HCT116 (cell line): ENCODE measurements at regions of chr6 and their contacts with region 1.

Region 1: GRCh38 chr6:1424306-1424928 is 35.0 kb downstream of the FOXF2 start:
- DNase-seq: peak; percentile 60
- ATAC-seq: peak; percentile 99
- H3K4me3 ChIP-seq: no peak overlapping the region
- H3K27ac ChIP-seq: no peak overlapping the region
- H3K4me1 ChIP-seq: peaks cover 0 to 8% of the 10 kb centered on the region in 2 experiments; a peak in 2 of 4 replicates
- H3K27me3 ChIP-seq: no peaks in the 10 kb centered on the region
- CTCF ChIP-seq: peak; percentile 61 to 81 (median 80)
- POLR2A ChIP-seq: no peak
- RAD21 ChIP-seq: peak; percentile 64

Region 2: DNA sequence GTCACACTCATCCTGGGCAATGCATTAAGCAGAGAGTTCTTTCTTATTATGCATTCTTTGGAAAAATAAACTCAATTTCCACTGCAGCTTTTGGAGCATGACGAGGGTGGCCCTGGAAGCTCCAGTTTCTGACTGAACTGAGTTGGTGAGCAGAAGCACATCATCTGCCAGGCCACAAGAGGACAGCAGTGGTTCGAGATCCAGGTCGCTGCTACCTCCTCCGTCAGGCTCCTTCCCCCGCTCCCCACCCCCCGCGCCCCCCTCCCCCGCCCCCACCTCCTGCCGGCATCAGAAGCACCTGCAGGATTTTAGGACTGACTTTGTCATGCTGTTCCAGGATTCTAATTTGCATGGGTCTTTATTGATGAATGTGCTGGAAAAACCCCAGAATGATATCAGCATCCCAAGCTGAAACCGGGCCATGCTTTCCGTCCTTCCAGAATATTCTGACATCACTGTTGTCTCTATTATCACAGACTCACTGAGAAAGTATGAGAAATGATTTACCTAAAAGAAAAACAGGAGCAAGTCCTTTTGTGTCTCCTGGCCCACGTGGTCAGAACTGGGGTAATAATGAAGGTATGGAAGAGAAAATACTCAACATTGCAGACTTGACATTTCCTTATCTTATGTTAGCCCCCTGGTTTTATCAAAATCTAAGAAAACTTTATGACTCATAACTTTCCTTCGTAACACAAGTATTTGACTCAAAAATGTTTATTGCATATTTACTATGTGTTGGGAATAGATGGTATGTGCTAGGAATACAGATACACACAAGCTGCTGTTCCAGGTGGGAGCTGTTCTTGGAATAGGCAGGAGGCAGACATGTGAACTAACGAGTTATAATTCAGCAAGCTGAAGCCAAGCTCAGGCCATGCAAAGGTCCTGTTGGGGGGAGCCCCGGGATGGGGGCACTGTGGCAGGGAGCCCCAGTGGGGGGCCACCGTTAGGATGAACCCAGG is 511.3 kb before region 1 on chr6:
- CTCF ChIA-PET with region 1: interaction called, 3 read pairs
- POLR2A ChIA-PET with region 1: no interaction called
- RAD21 ChIA-PET with region 1: interaction called in 1 of 2 experiments, 4 read pairs
- intact Hi-C with region 1: loop called (anchors 10 kb)
- DNase-seq: peak; percentile 22
- ATAC-seq: peak; percentile 90
- H3K4me3 ChIP-seq: no peak overlapping the region
- H3K27ac ChIP-seq: no peak overlapping the region
- H3K4me1 ChIP-seq: no peaks in the 10 kb centered on the region
- H3K27me3 ChIP-seq: no peaks in the 10 kb centered on the region
- CTCF ChIP-seq: peak; percentile 29 to 61 (median 38); a peak in 5 of 6 replicates
- POLR2A ChIP-seq: no peak
- RAD21 ChIP-seq: peak; percentile 69

Region 3: GRCh38 chr6:1286972-1287610 is 137.3 kb before region 1 on chr6:
- CTCF ChIA-PET with region 1: no interaction called
- POLR2A ChIA-PET with region 1: no interaction called
- RAD21 ChIA-PET with region 1: no interaction called
- intact Hi-C with region 1: no loop called
- DNase-seq: peak; percentile 19
- ATAC-seq: no peak
- H3K4me3 ChIP-seq: no peak overlapping the region
- H3K27ac ChIP-seq: no peak overlapping the region
- H3K4me1 ChIP-seq: peaks cover 0 to 5% of the 10 kb centered on the region in 2 experiments; a peak in 1 of 4 replicates
- H3K27me3 ChIP-seq: no peaks in the 10 kb centered on the region
- CTCF ChIP-seq: no peak
- POLR2A ChIP-seq: no peak
- RAD21 ChIP-seq: no peak

Region 4: GRCh38 chr6:1396952-1397868 is 27.2 kb before region 1 on chr6:
- CTCF ChIA-PET with region 1: interaction called, 14 read pairs
- POLR2A ChIA-PET with region 1: no interaction called
- RAD21 ChIA-PET with region 1: no interaction called
- intact Hi-C with region 1: no loop called
- DNase-seq: peak; percentile 54
- ATAC-seq: peak; percentile 90
- H3K4me3 ChIP-seq: peak overlapping the region in 1 of 2 experiments; percentile 15; a peak in 1 of 4 replicates
- H3K27ac ChIP-seq: no peak overlapping the region
- H3K4me1 ChIP-seq: 0 out of 4 replicates have a peak, but pooled peaks cover 0 to 3% of the 10 kb centered on the region in 2 experiments
- H3K27me3 ChIP-seq: no peaks in the 10 kb centered on the region
- CTCF ChIP-seq: peak; percentile 78 to 98 (median 97)
- POLR2A ChIP-seq: no peak
- RAD21 ChIP-seq: peak; percentile 81

Region 5: DNA sequence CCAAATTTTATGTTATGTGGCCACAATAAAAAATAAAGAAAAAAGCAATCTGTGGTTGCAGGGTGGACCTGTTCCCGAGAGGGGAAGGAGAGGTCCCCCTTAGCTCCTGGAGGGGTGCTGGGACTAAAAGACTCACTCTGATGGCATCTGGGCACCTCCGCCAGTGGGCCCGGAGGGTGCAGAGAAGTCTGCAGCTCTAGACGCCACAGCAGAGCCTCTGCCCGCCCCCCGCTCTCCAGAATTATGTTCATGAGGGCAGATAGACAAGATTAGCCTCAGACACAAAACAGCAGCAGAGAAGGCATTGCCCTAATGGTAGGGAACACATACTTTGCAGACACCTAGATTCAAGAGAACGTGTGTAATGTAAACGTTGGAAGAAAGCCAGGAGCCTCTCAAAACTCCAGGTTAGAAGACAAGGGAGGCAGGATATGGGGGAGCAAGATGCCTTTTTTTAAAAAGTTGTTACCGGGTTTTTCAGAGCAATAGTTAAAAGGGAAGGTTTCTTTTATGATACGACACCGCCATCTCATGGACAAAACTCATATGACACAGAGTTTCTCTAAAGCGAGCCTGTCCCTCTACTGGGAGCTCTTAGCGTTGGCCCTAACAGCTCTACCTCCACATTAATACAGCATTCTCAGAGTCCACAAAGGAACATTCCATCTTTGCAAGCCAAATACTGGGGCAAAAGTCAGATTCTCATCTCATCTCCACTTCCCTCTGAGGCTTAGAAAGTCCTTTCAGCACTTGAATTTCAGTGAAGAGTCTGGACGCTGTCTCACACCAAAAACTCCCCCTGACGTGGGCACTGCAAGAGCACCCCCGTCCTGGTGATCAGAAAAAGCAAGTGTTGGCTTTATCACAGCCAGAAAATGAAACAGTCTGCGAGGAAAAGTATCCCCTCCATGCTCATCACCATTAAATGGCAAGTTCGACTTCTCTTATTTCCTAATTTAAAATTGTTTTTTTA is 12.2 kb after region 1 on chr6:
- CTCF ChIA-PET with region 1: interaction called, 29 read pairs
- POLR2A ChIA-PET with region 1: no interaction called
- RAD21 ChIA-PET with region 1: interaction called in 1 of 2 experiments, 3 read pairs
- intact Hi-C with region 1: no loop called
- DNase-seq: peak; percentile 57
- ATAC-seq: peak; percentile 97
- H3K4me3 ChIP-seq: no peak overlapping the region
- H3K27ac ChIP-seq: no peak overlapping the region
- H3K4me1 ChIP-seq: peaks cover 0 to 5% of the 10 kb centered on the region in 2 experiments; a peak in 2 of 4 replicates
- H3K27me3 ChIP-seq: peaks cover 5% of the 10 kb centered on the region; the same call in 1 of the 2 replicates
- CTCF ChIP-seq: peak; percentile 61 to 84 (median 72)
- POLR2A ChIP-seq: no peak
- RAD21 ChIP-seq: peak; percentile 81

Region 6: DNA sequence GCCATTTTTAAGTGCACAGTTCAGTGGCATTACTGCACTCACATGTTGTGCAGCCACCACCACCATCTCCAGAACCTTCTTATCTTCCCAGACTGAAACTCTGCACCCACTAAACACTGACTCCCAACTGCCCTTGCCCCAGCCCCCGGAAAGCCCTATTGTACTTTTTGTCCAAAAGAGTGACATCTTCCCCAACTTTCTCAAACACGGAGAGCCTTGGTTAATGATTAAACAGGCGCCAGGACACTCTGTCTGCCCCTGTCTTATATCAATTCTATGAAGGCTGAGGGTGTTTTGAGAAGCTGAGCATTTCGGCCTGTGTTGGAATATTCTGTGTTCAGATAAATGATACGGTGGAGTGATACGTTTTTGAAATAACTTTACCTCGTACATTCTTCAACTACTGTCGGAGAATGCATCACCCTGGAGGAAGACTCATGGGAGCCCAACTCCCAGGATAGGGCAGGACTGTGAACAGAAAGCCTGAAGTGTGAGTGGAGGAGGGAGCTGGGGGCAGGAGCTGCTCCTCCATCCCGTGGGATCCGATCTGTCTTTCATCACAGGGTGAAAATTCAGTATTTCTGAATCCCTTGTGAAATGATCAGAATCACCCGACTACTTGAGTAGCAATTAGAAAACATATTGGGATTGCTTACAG is 116.6 kb after region 1 on chr6:
- CTCF ChIA-PET with region 1: no interaction called
- POLR2A ChIA-PET with region 1: no interaction called
- RAD21 ChIA-PET with region 1: no interaction called
- intact Hi-C with region 1: no loop called
- DNase-seq: no peak
- ATAC-seq: no peak
- H3K4me3 ChIP-seq: no peak overlapping the region
- H3K27ac ChIP-seq: no peak overlapping the region
- H3K4me1 ChIP-seq: no peaks in the 10 kb centered on the region
- H3K27me3 ChIP-seq: no peaks in the 10 kb centered on the region
- CTCF ChIP-seq: no peak
- POLR2A ChIP-seq: no peak
- RAD21 ChIP-seq: no peak